ENCODE measurements at regions of chr4 and their contacts with region 1.

Region 1: GRCh38 chr4:88185906-88186305 is 27.5 kb upstream of the ABCG2 start:
- DNase-seq: no peak
- ATAC-seq: no peak
- H3K4me3 ChIP-seq: no peak overlapping the region
- H3K27ac ChIP-seq: no peak overlapping the region
- H3K4me1 ChIP-seq: no peaks in the 10 kb centered on the region
- H3K27me3 ChIP-seq: no peaks in the 10 kb centered on the region

Region 2: GRCh38 chr4:88110826-88111225 is 75.1 kb before region 1 on chr4:
- intact Hi-C with region 1: loop called in 1 of 2 experiments (anchors 10 kb)
- DNase-seq: no peak
- ATAC-seq: no peak
- H3K4me3 ChIP-seq: no peak overlapping the region
- H3K27ac ChIP-seq: no peak overlapping the region
- H3K4me1 ChIP-seq: peaks cover 0 to 4% of the 10 kb centered on the region in 2 donors
- H3K27me3 ChIP-seq: no peaks in the 10 kb centered on the region

Measured in aorta (tissue), 5 donors.